Mammary epithelial cell (primary cell): ENCODE measurements at regions of chr9 and their contacts with region 1.

Region 1: DNA sequence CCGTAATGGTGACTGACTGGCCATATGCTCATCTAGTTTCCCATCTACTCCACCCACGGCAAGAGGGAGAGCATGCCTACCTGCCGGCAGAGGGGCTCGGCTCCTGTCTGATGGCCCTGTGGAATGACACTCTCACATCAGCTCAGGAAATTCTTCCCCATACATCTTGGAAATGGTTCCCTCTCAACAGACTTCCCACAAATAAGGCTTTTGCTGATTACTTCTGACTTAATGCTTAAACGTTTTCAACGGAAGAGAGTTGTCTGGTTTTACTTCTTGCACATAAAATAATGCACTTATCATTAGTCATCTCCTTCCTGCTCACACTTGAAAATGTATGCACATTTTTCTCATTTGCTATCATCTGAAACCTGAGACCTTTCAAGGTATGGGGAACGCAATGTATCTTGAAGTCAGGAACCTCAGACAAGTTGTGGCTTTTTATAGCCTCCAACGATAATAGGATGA is 129.5 kb downstream of the TTLL11 start:
- DNase-seq: peak; percentile 78
- H3K4me3 ChIP-seq: peak overlapping the region; percentile 2 to 51 (median 4)
- H3K27ac ChIP-seq: peak overlapping the region; percentile 67
- H3K4me1 ChIP-seq: peaks cover 32% of the 10 kb centered on the region
- H3K27me3 ChIP-seq: no peaks in the 10 kb centered on the region
- CTCF ChIP-seq: no peak

Region 2: GRCh38 chr9:121895818-121896544 is 67.6 kb before region 1 on chr9:
- CTCF ChIA-PET with region 1: no interaction called
- dilution Hi-C with region 1: no loop called
- in situ Hi-C with region 1: no loop called
- intact Hi-C with region 1: loop called (anchors 5 kb)
- DNase-seq: no peak
- H3K4me3 ChIP-seq: no peak overlapping the region
- H3K27ac ChIP-seq: no peak overlapping the region
- H3K4me1 ChIP-seq: no peaks in the 10 kb centered on the region
- H3K27me3 ChIP-seq: no peaks in the 10 kb centered on the region
- CTCF ChIP-seq: no peak

Region 3: DNA sequence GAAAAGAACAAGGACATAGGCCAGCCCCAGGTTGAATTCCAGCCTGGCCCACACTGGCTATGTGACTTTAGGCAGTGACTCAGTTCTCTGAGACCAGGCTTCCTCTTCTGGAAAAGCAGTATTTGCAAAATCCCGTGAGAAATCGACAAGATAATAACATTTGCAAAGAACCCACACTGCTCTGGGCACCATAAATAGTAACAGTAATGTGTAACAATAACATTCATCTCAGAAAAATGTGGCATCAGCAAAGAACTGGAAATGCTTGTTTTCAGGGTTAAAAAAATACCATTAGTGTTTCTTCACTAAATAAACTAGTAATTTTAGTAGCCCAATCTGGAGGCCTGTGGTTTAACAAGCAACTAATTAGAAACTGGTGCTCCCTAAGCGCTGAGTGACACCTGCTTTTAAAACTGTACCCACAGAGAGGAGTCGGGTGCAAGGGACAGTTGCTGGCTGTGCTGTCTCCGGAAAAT is 18.8 kb before region 1 on chr9:
- CTCF ChIA-PET with region 1: no interaction called
- dilution Hi-C with region 1: no loop called
- in situ Hi-C with region 1: no loop called
- intact Hi-C with region 1: loop called (anchors 2 kb)
- DNase-seq: peak; percentile 84
- H3K4me3 ChIP-seq: no peak overlapping the region
- H3K27ac ChIP-seq: no peak overlapping the region
- H3K4me1 ChIP-seq: peaks cover 27% of the 10 kb centered on the region
- H3K27me3 ChIP-seq: no peaks in the 10 kb centered on the region
- CTCF ChIP-seq: no peak

Region 4: GRCh38 chr9:122498883-122499288 is 535.3 kb after region 1 on chr9:
- CTCF ChIA-PET with region 1: no interaction called
- dilution Hi-C with region 1: no loop called
- in situ Hi-C with region 1: no loop called
- intact Hi-C with region 1: no loop called
- DNase-seq: peak; percentile 86
- H3K4me3 ChIP-seq: no peak overlapping the region
- H3K27ac ChIP-seq: no peak overlapping the region
- H3K4me1 ChIP-seq: peaks cover 9% of the 10 kb centered on the region
- H3K27me3 ChIP-seq: no peaks in the 10 kb centered on the region
- CTCF ChIP-seq: peak; percentile 89 to 96